ENCODE measurements at regions of chr6 and their contacts with region 1.

Region 1: DNA sequence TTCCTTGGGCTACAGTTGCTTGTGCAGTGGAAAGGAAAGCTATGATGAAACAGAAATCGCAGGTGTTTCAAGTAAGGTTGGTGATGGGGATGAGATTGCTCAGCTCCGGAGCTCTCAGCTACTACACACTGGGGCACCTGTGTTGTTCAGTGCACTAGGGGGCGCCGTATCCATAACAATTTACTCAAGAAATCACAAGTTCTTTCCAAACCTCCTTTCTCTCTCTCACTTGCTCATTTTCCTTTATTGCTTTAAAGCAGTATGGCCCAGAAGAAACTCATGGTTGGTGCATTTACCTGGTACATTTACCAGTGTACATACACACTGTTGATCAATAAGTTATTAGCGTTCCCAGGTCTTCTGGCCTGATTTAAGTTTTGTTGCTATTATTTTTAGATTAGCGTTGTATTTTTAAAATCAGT is 235.2 kb upstream of the TAB2 start:
- DNase-seq: peak; percentile 80
- H3K4me3 ChIP-seq: no peak overlapping the region
- H3K27ac ChIP-seq: no peak overlapping the region
- H3K27me3 ChIP-seq: no peaks in the 10 kb centered on the region
- CTCF ChIP-seq: peak; percentile 90

Region 2: GRCh38 chr6:149246691-149247384 is 164.5 kb after region 1 on chr6:
- in situ Hi-C with region 1: no loop called
- DNase-seq: no peak
- H3K4me3 ChIP-seq: no peak overlapping the region
- H3K27ac ChIP-seq: no peak overlapping the region
- H3K27me3 ChIP-seq: no peaks in the 10 kb centered on the region
- CTCF ChIP-seq: no peak

Region 3: GRCh38 chr6:149405823-149406765 is 323.8 kb after region 1 on chr6:
- in situ Hi-C with region 1: loop called (anchors 25 kb)
- DNase-seq: no peak
- H3K4me3 ChIP-seq: no peak overlapping the region
- H3K27ac ChIP-seq: no peak overlapping the region
- H3K27me3 ChIP-seq: no peaks in the 10 kb centered on the region
- CTCF ChIP-seq: no peak

Measured in brain microvascular endothelial cell (primary cell).